ENCODE measurements at regions of chr6 and their contacts with region 1.

Region 1: GRCh38 chr6:42390228-42390934 is 61.3 kb downstream of the TRERF1 start:
- DNase-seq: peak; percentile 62
- H3K4me3 Mint-ChIP-seq: peak overlapping the region; percentile 60
- H3K27ac Mint-ChIP-seq: peak overlapping the region; percentile 93
- H3K4me1 Mint-ChIP-seq: peaks cover 89% of the 10 kb centered on the region
- H3K27me3 Mint-ChIP-seq: no peaks in the 10 kb centered on the region

Region 2: DNA sequence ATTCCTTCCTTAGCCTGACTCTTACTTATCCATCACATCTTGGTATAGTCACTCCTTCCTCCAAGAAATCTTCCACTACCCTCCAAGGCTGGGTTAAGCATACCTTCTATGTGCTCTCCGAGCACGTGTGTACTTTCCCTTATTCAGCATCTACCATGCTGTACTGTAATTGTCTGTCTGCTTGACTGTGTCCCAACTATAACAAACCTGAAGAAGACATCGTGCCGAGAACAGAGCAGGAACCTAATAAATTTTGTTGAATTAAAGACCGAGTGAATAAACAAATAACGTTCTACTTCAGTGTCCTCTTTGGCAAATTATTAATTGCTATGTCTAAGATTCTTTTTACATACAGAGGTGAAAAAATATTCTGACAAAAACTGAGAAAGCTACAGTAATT is 531.0 kb before region 1 on chr6:
- CTCF ChIA-PET with region 1: no interaction called
- POLR2A ChIA-PET with region 1: no interaction called
- DNase-seq: no peak
- H3K4me3 Mint-ChIP-seq: no peak overlapping the region
- H3K27ac Mint-ChIP-seq: no peak overlapping the region
- H3K4me1 Mint-ChIP-seq: no peaks in the 10 kb centered on the region
- H3K27me3 Mint-ChIP-seq: no peaks in the 10 kb centered on the region

Region 3: GRCh38 chr6:42255050-42255449 is 135.3 kb before region 1 on chr6:
- CTCF ChIA-PET with region 1: no interaction called
- POLR2A ChIA-PET with region 1: no interaction called
- DNase-seq: no peak
- H3K4me3 Mint-ChIP-seq: no peak overlapping the region
- H3K27ac Mint-ChIP-seq: no peak overlapping the region
- H3K4me1 Mint-ChIP-seq: no peaks in the 10 kb centered on the region
- H3K27me3 Mint-ChIP-seq: no peaks in the 10 kb centered on the region

Region 4: GRCh38 chr6:42367353-42368011 is 22.9 kb before region 1 on chr6:
- CTCF ChIA-PET with region 1: no interaction called
- POLR2A ChIA-PET with region 1: interaction called, 67 read pairs
- DNase-seq: peak; percentile 48
- H3K4me3 Mint-ChIP-seq: peak overlapping the region; percentile 66
- H3K27ac Mint-ChIP-seq: peak overlapping the region; percentile 96
- H3K4me1 Mint-ChIP-seq: peaks cover 74% of the 10 kb centered on the region
- H3K27me3 Mint-ChIP-seq: no peaks in the 10 kb centered on the region

Region 5: DNA sequence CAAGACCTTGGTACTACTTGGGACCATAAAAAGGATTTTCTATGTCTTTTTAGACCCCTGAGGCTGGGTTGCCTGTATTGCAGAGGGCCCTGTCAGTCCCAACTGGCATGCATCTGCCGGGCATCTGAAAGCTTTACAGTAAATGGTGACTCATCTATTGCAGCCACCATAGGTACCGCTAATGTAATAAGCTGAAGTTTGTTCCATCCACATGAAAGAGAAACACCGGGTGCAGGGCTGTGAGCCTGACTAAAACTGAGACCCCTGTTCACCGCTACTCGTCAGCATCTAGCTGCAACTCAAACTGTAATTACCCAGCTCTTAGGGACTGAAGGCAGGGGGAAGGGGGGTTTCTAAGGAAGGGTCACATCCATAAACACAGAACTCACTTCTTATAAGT is 11.8 kb after region 1 on chr6:
- CTCF ChIA-PET with region 1: interaction called, 65 read pairs
- POLR2A ChIA-PET with region 1: interaction called, 107 read pairs
- DNase-seq: peak; percentile 68
- H3K4me3 Mint-ChIP-seq: peak overlapping the region; percentile 6
- H3K27ac Mint-ChIP-seq: peak overlapping the region; percentile 58
- H3K4me1 Mint-ChIP-seq: peaks cover 63% of the 10 kb centered on the region
- H3K27me3 Mint-ChIP-seq: no peaks in the 10 kb centered on the region

Region 6: GRCh38 chr6:42428326-42429041 is 38.1 kb after region 1 on chr6:
- CTCF ChIA-PET with region 1: interaction called, 12 read pairs
- POLR2A ChIA-PET with region 1: interaction called, 12 read pairs
- DNase-seq: peak; percentile 49
- H3K4me3 Mint-ChIP-seq: peak overlapping the region; percentile 0
- H3K27ac Mint-ChIP-seq: peak overlapping the region; percentile 47
- H3K4me1 Mint-ChIP-seq: peaks cover 51% of the 10 kb centered on the region
- H3K27me3 Mint-ChIP-seq: no peaks in the 10 kb centered on the region

Region 7: DNA sequence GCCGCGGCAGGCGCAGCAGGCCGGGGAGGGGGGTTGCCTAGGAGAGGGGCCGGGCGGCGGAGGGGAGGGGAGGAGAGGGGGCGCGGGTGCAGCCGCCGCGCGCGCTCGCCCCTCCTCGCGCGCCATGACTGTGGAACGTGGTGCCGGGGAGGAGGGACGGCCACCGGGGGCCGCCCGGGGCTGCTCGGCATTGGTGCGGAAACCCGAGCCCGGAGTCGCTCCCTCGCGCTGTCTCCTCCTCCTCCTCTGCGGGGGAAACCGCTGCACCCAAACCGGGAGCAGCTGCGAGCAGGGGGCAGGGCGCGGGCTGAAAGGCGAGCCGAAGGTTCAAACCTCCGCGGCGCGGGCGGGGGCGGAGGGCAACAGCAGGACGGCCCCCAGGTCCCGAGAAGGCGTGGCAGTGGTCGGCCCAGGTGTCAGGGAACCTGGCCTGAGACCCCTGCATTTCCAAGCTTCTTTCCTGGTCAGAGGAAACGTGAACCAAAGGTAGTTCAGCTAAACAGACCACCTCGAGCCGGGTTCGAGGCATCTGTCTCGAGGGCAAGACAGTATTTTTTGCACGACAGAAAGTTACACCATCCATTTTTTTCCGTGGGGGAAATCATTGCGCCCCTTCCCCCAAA is 62.8 kb after region 1 on chr6:
- CTCF ChIA-PET with region 1: interaction called, 4 read pairs
- POLR2A ChIA-PET with region 1: interaction called, 52 read pairs
- DNase-seq: peak; percentile 82
- H3K4me3 Mint-ChIP-seq: peak overlapping the region; percentile 87
- H3K27ac Mint-ChIP-seq: no peak overlapping the region
- H3K4me1 Mint-ChIP-seq: peaks cover 34% of the 10 kb centered on the region
- H3K27me3 Mint-ChIP-seq: peaks cover 3% of the 10 kb centered on the region

Region 8: GRCh38 chr6:42726485-42727086 is 336.2 kb after region 1 on chr6:
- CTCF ChIA-PET with region 1: no interaction called
- POLR2A ChIA-PET with region 1: no interaction called
- DNase-seq: peak; percentile 79
- H3K4me3 Mint-ChIP-seq: peak overlapping the region; percentile 77
- H3K27ac Mint-ChIP-seq: peak overlapping the region; percentile 91
- H3K4me1 Mint-ChIP-seq: peaks cover 22% of the 10 kb centered on the region
- H3K27me3 Mint-ChIP-seq: no peaks in the 10 kb centered on the region

Measured in activated CD4-positive, alpha-beta memory T cell treated with anti-CD3 and anti-CD28 coated beads, Interleukin-2, amount 10 ng/mL, durations not matched to agents 7 days and 5 days (primary cell).